K562 (cell line): ENCODE measurements at regions of chr1 and their contacts with region 1.

Region 1: GRCh38 chr1:180178511-180179161 is 24.0 kb downstream of the QSOX1 start:
- DNase-seq: peak; percentile 78 to 82 (median 80)
- ATAC-seq: peak; percentile 68
- H3K4me3 ChIP-seq: no peak overlapping the region
- H3K27ac ChIP-seq: no peak overlapping the region
- H3K4me1 ChIP-seq: no peaks in the 10 kb centered on the region
- H3K27me3 ChIP-seq: no peaks in the 10 kb centered on the region
- CTCF ChIP-seq: peak; percentile 91 to 99 (median 98)
- EP300 ChIP-seq: 0 out of 2 replicates have a peak, but pooled peaks have one; percentile 16
- POLR2A ChIP-seq: no peak
- RAD21 ChIP-seq: peak; percentile 93 to 97

Region 2: GRCh38 chr1:180033390-180033789 is 145.2 kb before region 1 on chr1:
- CTCF ChIA-PET with region 1: no interaction called
- POLR2A ChIA-PET with region 1: no interaction called
- in situ Hi-C with region 1: no loop called
- intact Hi-C with region 1: loop called (anchors 10 kb)
- DNase-seq: no peak
- ATAC-seq: no peak; the same call in 2 of the 3 replicates
- H3K4me3 ChIP-seq: no peak overlapping the region
- H3K27ac ChIP-seq: peak overlapping the region; percentile 6; the same call in 1 of the 3 replicates
- H3K4me1 ChIP-seq: no peaks in the 10 kb centered on the region; a peak in 1 of 5 replicates
- H3K27me3 ChIP-seq: no peaks in the 10 kb centered on the region
- CTCF ChIP-seq: no peak
- EP300 ChIP-seq: no peak
- POLR2A ChIP-seq: no peak
- RAD21 ChIP-seq: no peak

Region 3: GRCh38 chr1:180397175-180397574 is 218.5 kb after region 1 on chr1:
- CTCF ChIA-PET with region 1: no interaction called
- POLR2A ChIA-PET with region 1: no interaction called
- in situ Hi-C with region 1: no loop called
- intact Hi-C with region 1: no loop called
- DNase-seq: no peak
- ATAC-seq: no peak
- H3K4me3 ChIP-seq: no peak overlapping the region
- H3K27ac ChIP-seq: no peak overlapping the region
- H3K4me1 ChIP-seq: no peaks in the 10 kb centered on the region
- H3K27me3 ChIP-seq: no peaks in the 10 kb centered on the region
- CTCF ChIP-seq: no peak
- EP300 ChIP-seq: no peak
- POLR2A ChIP-seq: no peak
- RAD21 ChIP-seq: no peak